OCI-LY7 (cell line): ENCODE measurements at regions of chr18 and their contacts with region 1.

Region 1: DNA sequence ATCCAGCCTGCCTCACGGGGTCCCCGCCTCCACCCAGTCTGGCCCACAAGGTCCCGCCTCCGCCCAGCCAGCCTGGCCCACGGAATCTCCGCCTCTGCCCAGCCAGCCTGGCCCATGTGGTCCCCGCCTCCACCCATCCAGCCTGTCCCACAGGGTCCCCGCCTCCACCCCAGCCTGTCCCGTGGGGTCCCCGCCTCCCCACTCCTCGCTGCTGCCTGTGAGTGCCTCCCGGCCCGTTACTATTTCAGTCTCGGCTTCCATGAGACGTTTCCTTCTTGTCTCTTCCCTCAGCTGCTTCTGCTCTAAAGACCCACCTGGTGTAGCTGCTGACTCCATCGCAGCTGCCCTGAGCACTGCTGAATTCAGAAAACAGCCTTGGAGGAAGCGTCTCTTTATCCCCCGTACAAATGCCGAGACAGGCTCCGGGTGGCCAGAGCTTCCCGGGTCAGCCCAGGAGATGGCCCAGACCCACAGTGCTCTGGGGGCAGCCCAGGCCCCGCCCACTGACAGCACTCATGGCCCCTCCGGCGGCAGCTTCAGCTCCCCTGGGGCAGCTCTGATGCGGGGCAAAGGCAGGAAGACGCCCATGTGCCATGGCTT is 69.8 kb downstream of the NFATC1 start:
- DNase-seq: peak; percentile 79
- H3K4me3 ChIP-seq: peak overlapping the region; percentile 66
- H3K27ac ChIP-seq: peak overlapping the region; percentile 96
- H3K4me1 ChIP-seq: peaks cover 64% of the 10 kb centered on the region
- CTCF ChIP-seq: no peak

Region 2: DNA sequence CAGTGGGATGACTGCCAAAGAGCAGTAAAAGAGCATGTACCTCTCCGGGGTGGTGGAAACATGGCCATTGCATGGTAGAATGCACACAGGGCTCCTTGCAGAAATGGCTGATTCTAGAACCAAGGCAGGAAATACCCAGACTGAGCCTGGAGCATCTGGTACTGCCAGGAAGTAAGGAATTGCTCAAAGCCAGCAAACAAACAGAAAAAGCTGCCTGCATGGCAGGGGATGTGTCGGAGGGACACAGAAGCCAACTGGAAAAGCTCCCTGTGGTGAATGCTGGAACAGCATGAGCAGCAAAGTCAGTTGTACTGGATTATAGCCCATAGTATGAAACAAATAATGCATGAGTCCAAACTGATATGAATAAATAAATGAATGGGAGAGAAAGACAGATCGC is 147.8 kb before region 1 on chr18:
- CTCF ChIA-PET with region 1: no interaction called
- POLR2A ChIA-PET with region 1: no interaction called
- intact Hi-C with region 1: no loop called
- DNase-seq: no peak
- H3K4me3 ChIP-seq: no peak overlapping the region
- H3K27ac ChIP-seq: no peak overlapping the region
- H3K4me1 ChIP-seq: no peaks in the 10 kb centered on the region
- CTCF ChIP-seq: no peak

Region 3: DNA sequence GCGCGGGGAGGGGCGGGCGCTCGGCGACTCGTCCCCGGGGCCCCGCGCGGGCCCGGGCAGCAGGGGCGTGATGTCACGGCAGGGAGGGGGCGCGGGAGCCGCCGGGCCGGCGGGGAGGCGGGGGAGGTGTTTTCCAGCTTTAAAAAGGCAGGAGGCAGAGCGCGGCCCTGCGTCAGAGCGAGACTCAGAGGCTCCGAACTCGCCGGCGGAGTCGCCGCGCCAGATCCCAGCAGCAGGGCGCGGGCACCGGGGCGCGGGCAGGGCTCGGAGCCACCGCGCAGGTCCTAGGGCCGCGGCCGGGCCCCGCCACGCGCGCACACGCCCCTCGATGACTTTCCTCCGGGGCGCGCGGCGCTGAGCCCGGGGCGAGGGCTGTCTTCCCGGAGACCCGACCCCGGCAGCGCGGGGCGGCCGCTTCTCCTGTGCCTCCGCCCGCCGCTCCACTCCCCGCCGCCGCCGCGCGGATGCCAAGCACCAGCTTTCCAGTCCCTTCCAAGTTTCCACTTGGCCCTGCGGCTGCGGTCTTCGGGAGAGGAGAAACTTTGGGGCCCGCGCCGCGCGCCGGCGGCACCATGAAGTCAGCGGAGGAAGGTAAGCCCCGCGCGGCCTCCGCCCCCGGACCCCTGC is 69.6 kb before region 1 on chr18 and contains the start of gene NFATC1:
- CTCF ChIA-PET with region 1: no interaction called
- POLR2A ChIA-PET with region 1: interaction called, 7 read pairs
- intact Hi-C with region 1: loop called (anchors 2 kb)
- DNase-seq: peak; percentile 61
- H3K4me3 ChIP-seq: peak within 1 kb of the TSS; percentile 86
- H3K27ac ChIP-seq: peak within 1 kb of the TSS; percentile 87
- H3K4me1 ChIP-seq: peaks cover 29% of the 10 kb centered on the region
- CTCF ChIP-seq: no peak
- total RNA-seq, gene NFATC1: 15.3 and 23.6 TPM in 2 replicates

Region 4: DNA sequence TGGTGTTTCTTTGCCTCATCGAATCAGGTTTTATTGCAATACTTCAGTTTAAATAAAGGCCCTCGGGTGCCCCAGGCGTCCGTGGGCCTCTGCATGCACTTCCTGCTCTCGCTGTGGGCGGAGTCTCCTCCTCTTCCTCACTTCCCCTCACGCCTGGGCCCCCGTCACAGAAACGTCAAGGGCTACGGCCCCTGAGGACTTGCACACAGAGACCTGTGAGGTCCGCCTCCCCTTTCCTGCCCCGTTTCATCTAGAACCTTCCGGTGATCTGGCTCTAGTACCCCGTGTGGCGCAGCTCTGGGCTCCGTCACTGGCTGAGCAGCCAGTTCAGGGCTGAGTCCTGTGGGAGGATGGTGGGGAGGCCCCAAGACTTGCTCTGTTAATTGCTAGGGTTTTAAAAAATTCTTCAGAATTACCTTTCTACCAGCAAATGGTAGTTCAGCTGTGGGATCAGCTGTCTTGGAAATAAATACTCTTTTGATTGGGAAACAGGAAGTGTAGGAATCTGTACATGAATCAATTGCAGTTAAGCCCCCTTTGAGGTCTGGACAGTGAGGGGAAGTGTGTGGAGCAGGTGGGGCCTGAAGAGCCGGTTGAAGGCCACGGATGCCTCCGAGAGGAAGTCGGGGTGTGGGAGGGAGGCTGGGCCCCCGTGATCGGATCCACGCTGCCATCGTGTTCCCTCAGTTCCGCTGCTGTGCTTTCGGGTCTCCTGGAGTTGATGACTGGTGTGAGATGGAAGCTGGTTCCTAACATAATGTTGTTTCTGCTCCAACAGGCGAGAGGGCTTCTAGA is 59.5 kb before region 1 on chr18:
- CTCF ChIA-PET with region 1: interaction called, 3 read pairs
- POLR2A ChIA-PET with region 1: interaction called, 3 read pairs
- intact Hi-C with region 1: loop called (anchors 2 kb)
- DNase-seq: peak; percentile 73
- H3K4me3 ChIP-seq: peak overlapping the region; percentile 73
- H3K27ac ChIP-seq: peak overlapping the region; percentile 76
- H3K4me1 ChIP-seq: peaks cover 55% of the 10 kb centered on the region
- CTCF ChIP-seq: no peak

Region 5: GRCh38 chr18:79422022-79422782 is 43.3 kb before region 1 on chr18:
- CTCF ChIA-PET with region 1: no interaction called
- POLR2A ChIA-PET with region 1: no interaction called
- intact Hi-C with region 1: no loop called
- DNase-seq: no peak
- H3K4me3 ChIP-seq: no peak overlapping the region
- H3K27ac ChIP-seq: no peak overlapping the region
- H3K4me1 ChIP-seq: no peaks in the 10 kb centered on the region
- CTCF ChIP-seq: no peak

Region 6: GRCh38 chr18:79567481-79568147 is 102.1 kb after region 1 on chr18:
- CTCF ChIA-PET with region 1: no interaction called
- POLR2A ChIA-PET with region 1: no interaction called
- intact Hi-C with region 1: no loop called
- DNase-seq: no peak
- H3K4me3 ChIP-seq: no peak overlapping the region
- H3K27ac ChIP-seq: no peak overlapping the region
- H3K4me1 ChIP-seq: no peaks in the 10 kb centered on the region
- CTCF ChIP-seq: no peak